A549 (cell line): ENCODE measurements at regions of chr18 and their contacts with region 1.

Region 1: DNA sequence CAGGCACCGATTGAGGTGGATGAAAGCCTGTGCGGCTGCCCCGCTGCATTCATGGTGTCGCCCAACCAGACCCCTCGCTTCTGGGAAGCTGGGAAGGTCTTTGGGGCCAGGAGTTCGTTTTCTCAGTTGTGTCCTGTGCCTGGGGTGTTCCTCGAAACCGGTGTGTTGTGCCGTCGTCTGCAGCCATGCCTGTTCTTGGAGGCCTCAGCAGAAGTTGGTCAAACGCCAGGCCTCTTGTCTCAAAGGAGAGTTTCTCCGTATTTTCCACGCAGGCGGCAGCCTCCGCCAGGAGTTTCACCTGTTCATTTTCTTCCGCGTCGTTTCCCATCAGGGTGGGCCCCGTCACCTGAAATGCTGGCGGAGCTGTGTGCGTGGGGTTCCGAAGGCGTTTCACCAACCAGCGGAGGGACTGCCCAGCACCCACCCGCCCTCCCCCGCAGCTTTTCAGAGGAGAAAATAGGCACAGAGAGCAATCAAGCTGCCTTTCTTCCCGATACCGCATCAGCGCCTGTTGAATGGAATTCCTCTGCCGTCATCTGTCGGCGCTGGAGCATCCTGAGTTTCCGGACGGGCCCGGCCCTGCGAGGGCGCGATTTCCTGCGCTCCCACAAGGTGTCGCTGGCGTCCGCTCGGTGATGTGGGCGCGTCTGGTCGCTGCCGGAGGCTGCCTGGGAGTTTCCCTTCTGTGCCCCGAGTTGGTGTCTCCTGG is 17.0 kb upstream of the NFATC1 start:
- DNase-seq: peak; percentile 48 to 58
- ATAC-seq: peak; percentile 60 to 75
- H3K4me3 ChIP-seq: no peak overlapping the region
- H3K27ac ChIP-seq: no peak overlapping the region
- H3K4me1 ChIP-seq: no peaks in the 10 kb centered on the region
- CTCF ChIP-seq: peak; percentile 54
- EP300 ChIP-seq: no peak
- POLR2A ChIP-seq: no peak
- RAD21 ChIP-seq: peak; percentile 43 to 51

Region 2: GRCh38 chr18:79393635-79394533 is 15.2 kb after region 1 on chr18:
- CTCF ChIA-PET with region 1: interaction called, 48 read pairs
- POLR2A ChIA-PET with region 1: interaction called, 6 read pairs
- DNase-seq: peak; percentile 64 to 71
- ATAC-seq: peak; percentile 76 to 79
- H3K4me3 ChIP-seq: peak overlapping the region; percentile 52
- H3K27ac ChIP-seq: peak overlapping the region; percentile 74 to 95
- H3K4me1 ChIP-seq: no peaks in the 10 kb centered on the region
- CTCF ChIP-seq: no peak
- EP300 ChIP-seq: no peak
- POLR2A ChIP-seq: no peak
- RAD21 ChIP-seq: no peak

Region 3: GRCh38 chr18:79411614-79412526 is 33.2 kb after region 1 on chr18:
- CTCF ChIA-PET with region 1: no interaction called
- POLR2A ChIA-PET with region 1: no interaction called
- DNase-seq: no peak
- ATAC-seq: no peak
- H3K4me3 ChIP-seq: no peak overlapping the region
- H3K27ac ChIP-seq: no peak overlapping the region
- H3K4me1 ChIP-seq: no peaks in the 10 kb centered on the region
- CTCF ChIP-seq: no peak
- EP300 ChIP-seq: no peak
- POLR2A ChIP-seq: no peak
- RAD21 ChIP-seq: no peak

Region 4: DNA sequence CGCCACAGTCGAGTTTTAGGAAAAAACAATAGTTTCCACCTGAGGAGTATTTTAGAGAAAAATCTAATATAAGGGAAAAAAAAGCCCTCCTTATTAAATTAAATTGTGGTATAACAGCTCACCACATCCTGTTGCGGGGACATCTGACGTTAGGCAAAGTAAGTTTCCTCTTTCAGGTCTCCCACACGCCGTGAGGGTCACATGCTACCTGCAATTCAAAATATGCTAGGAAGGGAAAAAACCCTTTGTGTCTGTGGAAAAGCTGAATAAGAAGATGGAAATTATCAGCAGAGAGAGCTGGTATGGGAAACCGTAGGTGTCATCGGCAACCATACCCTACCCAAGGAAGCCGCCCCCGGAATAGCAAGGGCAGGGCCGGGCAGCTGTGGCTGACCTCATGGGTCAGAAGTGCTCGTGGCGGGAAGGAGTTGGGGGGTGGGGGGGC is 145.1 kb after region 1 on chr18:
- CTCF ChIA-PET with region 1: interaction called, 144 read pairs
- POLR2A ChIA-PET with region 1: no interaction called
- DNase-seq: no peak
- ATAC-seq: no peak
- H3K4me3 ChIP-seq: no peak overlapping the region
- H3K27ac ChIP-seq: no peak overlapping the region
- H3K4me1 ChIP-seq: no peaks in the 10 kb centered on the region
- CTCF ChIP-seq: no peak
- EP300 ChIP-seq: no peak
- POLR2A ChIP-seq: no peak
- RAD21 ChIP-seq: no peak

Region 5: GRCh38 chr18:79528846-79529245 is 150.2 kb after region 1 on chr18:
- CTCF ChIA-PET with region 1: interaction called, 144 read pairs
- POLR2A ChIA-PET with region 1: no interaction called
- DNase-seq: peak; percentile 62 to 73
- ATAC-seq: peak; percentile 75 to 91; a peak in 5 of 6 replicates
- H3K4me3 ChIP-seq: no peak overlapping the region
- H3K27ac ChIP-seq: no peak overlapping the region
- H3K4me1 ChIP-seq: no peaks in the 10 kb centered on the region
- CTCF ChIP-seq: peak; percentile 64
- EP300 ChIP-seq: no peak
- POLR2A ChIP-seq: no peak
- RAD21 ChIP-seq: peak; percentile 78 to 83

Region 6: DNA sequence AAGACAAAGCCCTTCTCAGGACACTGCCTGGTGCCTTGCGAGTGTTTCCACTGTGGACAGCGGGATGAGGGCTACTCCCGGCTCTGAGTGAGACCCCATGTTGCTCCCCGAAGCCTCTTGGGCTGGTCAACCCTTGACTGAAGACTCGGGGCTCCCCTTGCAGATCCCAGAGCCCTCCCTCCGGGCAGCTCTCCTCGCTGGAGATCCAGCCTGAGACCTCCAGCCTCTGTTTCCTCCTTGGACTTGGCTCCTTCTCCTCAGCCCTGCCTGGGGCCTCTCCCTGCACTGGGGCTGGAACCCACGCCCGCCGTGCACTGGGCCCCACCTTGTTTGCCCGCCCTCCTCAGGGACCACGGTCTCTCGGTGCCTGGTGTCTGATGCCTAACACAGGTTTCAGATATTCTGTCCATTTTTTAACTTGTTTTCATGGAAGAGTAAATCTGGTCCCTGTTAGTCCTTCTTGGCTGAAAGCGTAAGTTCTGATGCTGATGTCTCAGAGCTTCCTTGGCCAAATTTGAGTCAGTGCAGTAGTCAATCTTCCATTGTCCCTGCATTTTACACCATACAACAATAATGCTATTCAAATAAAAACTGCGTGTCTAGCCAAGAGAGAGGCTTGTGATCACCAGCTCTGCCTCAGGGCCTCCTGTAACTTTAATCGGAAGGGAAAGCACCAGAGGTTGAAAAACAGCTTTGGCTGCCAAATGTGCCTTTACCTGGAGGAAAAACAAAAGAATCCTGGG is 161.6 kb after region 1 on chr18:
- CTCF ChIA-PET with region 1: interaction called, 11 read pairs
- POLR2A ChIA-PET with region 1: no interaction called
- DNase-seq: no peak
- ATAC-seq: no peak
- H3K4me3 ChIP-seq: no peak overlapping the region
- H3K27ac ChIP-seq: no peak overlapping the region
- H3K4me1 ChIP-seq: no peaks in the 10 kb centered on the region
- CTCF ChIP-seq: no peak
- EP300 ChIP-seq: no peak
- POLR2A ChIP-seq: no peak
- RAD21 ChIP-seq: no peak

Region 7: GRCh38 chr18:79644006-79644665 is 265.4 kb after region 1 on chr18:
- CTCF ChIA-PET with region 1: interaction called, 70 read pairs
- POLR2A ChIA-PET with region 1: no interaction called
- DNase-seq: peak; percentile 64 to 68
- ATAC-seq: peak; percentile 88 to 95
- H3K4me3 ChIP-seq: no peak overlapping the region
- H3K27ac ChIP-seq: no peak overlapping the region
- H3K4me1 ChIP-seq: no peaks in the 10 kb centered on the region
- CTCF ChIP-seq: peak; percentile 74
- EP300 ChIP-seq: no peak
- POLR2A ChIP-seq: no peak
- RAD21 ChIP-seq: peak; percentile 84 to 86